ENCODE measurements at regions of chr7 and their contacts with region 1.

Region 1: GRCh38 chr7:130896898-130897514 is 163.0 kb upstream of the KLF14 start:
- DNase-seq: no peak
- H3K4me3 ChIP-seq: no peak overlapping the region
- H3K27me3 ChIP-seq: no peaks in the 10 kb centered on the region
- CTCF ChIP-seq: peak; percentile 77

Region 2: GRCh38 chr7:130598051-130598450 is 299.0 kb before region 1 on chr7:
- CTCF ChIA-PET with region 1: no interaction called
- POLR2A ChIA-PET with region 1: no interaction called
- DNase-seq: no peak
- H3K4me3 ChIP-seq: no peak overlapping the region
- H3K27me3 ChIP-seq: no peaks in the 10 kb centered on the region
- CTCF ChIP-seq: no peak

Region 3: GRCh38 chr7:130912862-130913631 is 16.0 kb after region 1 on chr7:
- CTCF ChIA-PET with region 1: interaction called, 25 read pairs
- POLR2A ChIA-PET with region 1: interaction called, 4 read pairs
- DNase-seq: peak; percentile 95
- H3K4me3 ChIP-seq: peak overlapping the region; percentile 70
- H3K27me3 ChIP-seq: no peaks in the 10 kb centered on the region
- CTCF ChIP-seq: no peak

Region 4: GRCh38 chr7:130961128-130961601 is 64.2 kb after region 1 on chr7:
- CTCF ChIA-PET with region 1: interaction called, 12 read pairs
- POLR2A ChIA-PET with region 1: no interaction called
- DNase-seq: no peak
- H3K4me3 ChIP-seq: no peak overlapping the region
- H3K27me3 ChIP-seq: no peaks in the 10 kb centered on the region
- CTCF ChIP-seq: no peak

Region 5: GRCh38 chr7:130996841-130997231 is 99.8 kb after region 1 on chr7:
- CTCF ChIA-PET with region 1: interaction called, 13 read pairs
- POLR2A ChIA-PET with region 1: no interaction called
- DNase-seq: no peak
- H3K4me3 ChIP-seq: no peak overlapping the region
- H3K27me3 ChIP-seq: no peaks in the 10 kb centered on the region
- CTCF ChIP-seq: no peak

Region 6: DNA sequence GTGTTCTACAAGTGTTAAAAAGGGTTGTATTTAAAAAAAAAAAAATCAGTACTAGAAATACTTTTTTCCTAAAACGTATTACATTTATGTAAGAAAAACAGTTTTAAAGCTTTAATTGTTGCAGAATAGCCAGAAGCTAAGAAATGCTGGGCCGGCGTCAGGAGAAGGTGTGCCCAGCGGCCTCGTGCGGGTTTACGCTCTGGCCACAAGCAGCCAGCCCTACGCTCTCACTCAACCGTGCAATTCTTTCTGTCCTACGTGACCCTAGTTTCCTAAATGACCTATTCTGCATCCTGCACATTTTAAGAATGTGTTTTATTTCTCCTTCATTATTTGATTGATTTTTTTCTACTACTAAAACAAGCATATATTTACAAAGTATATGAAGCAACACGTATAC is 116.7 kb after region 1 on chr7:
- CTCF ChIA-PET with region 1: interaction called, 33 read pairs
- POLR2A ChIA-PET with region 1: no interaction called
- DNase-seq: no peak
- H3K4me3 ChIP-seq: no peak overlapping the region
- H3K27me3 ChIP-seq: no peaks in the 10 kb centered on the region
- CTCF ChIP-seq: no peak

Region 7: DNA sequence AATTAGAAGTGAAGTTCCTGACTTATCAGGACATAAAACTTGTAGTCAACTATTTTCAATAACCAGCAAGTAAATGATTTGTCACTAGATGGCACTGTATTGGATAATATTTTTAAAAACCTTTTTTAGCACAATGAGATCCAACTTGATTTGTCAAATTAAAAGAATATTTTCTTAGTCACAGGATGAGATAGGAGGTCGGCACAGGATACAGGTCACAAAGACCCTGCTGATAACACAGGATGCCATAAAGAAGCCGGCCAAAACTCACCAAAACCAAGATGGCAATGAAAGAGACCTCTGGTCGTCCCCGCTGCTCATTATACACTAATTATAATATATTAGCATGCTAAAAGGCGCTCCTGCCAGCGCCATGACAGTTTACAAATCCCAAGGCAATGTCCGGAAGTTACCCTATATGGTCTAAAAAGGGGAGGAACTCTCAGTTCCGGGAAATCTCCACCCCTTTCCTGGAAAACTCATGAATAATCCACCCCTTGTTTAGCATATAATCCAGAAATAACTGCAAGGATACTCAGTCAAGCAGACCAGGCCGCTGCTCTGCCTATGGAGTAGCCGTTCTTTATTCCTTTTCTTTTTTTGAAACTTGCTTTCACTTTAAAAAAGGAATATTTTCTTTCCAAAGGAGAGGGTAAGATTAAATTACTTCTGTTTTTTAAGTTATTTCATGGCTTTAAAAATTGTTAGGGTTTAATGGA is 174.9 kb after region 1 on chr7:
- CTCF ChIA-PET with region 1: interaction called, 11 read pairs
- POLR2A ChIA-PET with region 1: no interaction called
- DNase-seq: no peak
- H3K4me3 ChIP-seq: no peak overlapping the region
- H3K27me3 ChIP-seq: no peaks in the 10 kb centered on the region
- CTCF ChIP-seq: no peak; the same call in 1 of the 2 replicates

Region 8: DNA sequence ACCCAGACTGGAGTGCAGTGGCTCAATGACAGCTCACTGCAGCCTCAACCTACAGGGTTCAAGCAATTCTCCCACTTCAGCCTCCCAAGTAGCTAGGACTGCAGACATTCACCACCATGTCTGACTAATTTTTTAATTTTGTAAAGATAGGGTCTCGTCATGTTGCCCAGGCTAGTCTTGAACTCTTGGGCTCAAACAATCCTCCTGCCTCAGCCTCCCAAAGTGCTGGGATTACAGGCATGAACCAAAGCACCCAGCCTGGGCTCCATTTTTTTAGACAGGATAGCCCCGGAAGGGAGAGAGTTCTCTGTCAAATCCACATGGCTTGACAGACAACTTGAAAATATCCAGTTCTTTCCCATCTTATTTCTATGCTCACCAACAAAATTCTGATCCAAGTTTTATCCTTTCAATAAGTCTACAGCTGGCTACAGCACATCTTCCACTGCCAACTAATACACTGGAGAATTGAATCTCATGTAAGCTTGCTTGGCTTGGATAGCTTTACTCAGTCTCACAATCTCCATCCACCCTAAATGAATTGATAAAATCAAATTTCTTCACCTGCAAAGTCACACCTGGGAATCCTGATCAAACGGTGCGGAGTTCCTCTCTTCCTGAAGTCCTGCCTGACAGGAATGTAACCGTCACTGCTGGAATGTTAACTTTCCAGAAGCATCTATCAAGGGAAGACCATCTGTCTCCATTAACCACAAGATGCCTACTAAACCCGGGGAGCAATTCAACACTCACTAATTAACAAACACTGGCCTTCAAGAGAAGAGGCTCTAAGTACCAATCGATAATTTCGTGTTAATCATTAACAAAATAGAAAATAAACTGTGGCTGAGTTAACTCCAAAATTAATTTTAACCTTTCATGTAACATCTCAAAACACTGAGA is 191.0 kb after region 1 on chr7:
- CTCF ChIA-PET with region 1: no interaction called
- POLR2A ChIA-PET with region 1: no interaction called
- DNase-seq: no peak
- H3K4me3 ChIP-seq: no peak overlapping the region
- H3K27me3 ChIP-seq: no peaks in the 10 kb centered on the region
- CTCF ChIP-seq: no peak

Region 9: DNA sequence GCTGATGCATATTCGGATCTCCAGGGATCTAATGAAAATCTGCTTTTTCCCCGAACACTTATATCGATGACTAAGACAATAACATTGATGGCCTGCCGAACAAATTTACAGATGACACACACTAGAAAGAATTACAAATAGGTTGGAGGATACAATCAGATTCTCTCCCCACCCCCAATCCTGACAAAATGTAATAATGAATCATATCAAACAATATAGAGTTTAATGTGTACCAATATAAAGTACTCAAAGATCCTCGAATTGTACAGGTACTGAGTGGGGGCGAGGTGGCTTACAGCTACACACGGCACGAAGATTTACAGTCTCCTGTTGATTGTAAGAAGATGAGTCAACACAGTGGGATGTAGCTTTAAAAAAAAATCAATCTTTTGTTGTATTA is 248.0 kb after region 1 on chr7:
- CTCF ChIA-PET with region 1: no interaction called
- POLR2A ChIA-PET with region 1: no interaction called
- DNase-seq: no peak
- H3K4me3 ChIP-seq: no peak overlapping the region
- H3K27me3 ChIP-seq: no peaks in the 10 kb centered on the region
- CTCF ChIP-seq: no peak

Region 10: DNA sequence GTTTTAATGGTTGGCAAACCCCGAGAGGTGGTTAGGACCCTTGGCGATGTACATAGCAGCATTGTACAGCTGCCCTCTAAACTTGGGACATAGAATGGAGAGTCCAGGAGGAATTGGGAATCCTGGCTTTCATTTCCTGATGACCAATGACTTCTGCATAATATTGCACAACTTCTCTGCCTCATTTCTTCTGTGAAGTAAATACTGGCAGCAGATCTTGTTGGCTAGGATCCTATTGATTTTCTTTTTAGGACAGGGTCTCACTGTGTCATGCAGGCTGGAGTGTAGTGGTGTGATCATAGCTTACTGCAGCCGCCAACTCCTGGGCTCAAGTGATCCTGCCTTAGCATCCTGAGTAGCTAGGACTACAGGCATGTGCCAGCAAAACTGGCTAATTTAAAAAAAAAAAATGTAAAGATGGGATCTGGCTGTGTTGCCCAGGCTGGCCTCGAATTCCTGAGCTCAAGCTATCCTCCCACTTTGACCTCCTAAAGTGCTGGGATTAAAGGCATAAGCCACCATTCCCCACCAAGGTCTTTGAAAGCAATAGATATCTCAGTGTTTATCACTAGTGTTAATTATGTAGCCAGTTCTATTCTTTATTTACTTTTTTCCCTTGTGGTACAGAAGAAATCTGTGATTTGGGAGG is 601.4 kb after region 1 on chr7:
- CTCF ChIA-PET with region 1: no interaction called
- POLR2A ChIA-PET with region 1: no interaction called
- DNase-seq: no peak
- H3K4me3 ChIP-seq: no peak overlapping the region
- H3K27me3 ChIP-seq: no peaks in the 10 kb centered on the region
- CTCF ChIP-seq: no peak

Measured in BJ (cell line).